Psoas muscle (tissue), 8 donors: ENCODE measurements at regions of chr9 and their contacts with region 1.

Region 1: DNA sequence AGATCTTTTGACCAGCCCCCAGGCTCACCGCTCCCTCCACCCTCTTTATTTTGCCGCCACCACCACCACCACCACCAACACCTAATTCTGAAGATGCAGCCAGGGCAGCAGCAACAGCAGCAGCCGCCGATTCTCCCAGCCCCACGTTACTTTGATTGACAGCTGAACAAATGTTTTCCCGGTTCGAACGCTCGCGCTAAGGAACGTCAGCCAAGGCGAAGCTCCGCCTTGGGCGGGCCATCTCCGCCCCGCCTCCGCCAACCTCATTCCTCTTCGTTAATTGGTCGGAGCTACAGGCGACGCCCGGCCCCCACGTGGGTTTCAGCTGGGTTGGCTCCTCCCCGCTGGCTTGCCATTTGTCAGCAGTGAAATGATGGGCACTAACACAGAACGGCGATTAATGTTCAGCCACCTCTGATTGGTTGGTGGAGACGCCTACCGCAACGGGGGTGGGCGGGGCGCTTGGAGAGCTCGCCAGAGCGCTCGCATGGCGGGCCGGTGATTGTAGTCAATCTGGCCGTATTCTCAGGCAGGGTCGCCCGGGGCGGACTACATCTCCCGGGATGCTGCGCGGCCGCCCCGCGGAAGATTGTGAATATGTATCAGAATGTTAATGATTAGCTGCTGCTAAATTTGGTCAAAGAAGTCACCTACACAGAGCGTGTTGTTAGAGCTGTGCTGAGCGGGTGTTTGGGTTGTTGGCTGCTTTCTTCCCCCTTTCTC is at the start of gene TLE4:
- DNase-seq: peak; percentile 99 to 100
- ATAC-seq: peak; percentile 90 to 97 (median 94)
- H3K4me3 ChIP-seq: peak within 1 kb of the TSS; percentile 96
- H3K27ac ChIP-seq: peak within 1 kb of the TSS; percentile 97
- H3K4me1 ChIP-seq: peaks cover 25% of the 10 kb centered on the region
- H3K27me3 ChIP-seq: no peaks in the 10 kb centered on the region
- CTCF ChIP-seq: no peak
- total RNA-seq, gene TLE4: 17.6 to 51.9 (median 21.9) TPM

Region 2: DNA sequence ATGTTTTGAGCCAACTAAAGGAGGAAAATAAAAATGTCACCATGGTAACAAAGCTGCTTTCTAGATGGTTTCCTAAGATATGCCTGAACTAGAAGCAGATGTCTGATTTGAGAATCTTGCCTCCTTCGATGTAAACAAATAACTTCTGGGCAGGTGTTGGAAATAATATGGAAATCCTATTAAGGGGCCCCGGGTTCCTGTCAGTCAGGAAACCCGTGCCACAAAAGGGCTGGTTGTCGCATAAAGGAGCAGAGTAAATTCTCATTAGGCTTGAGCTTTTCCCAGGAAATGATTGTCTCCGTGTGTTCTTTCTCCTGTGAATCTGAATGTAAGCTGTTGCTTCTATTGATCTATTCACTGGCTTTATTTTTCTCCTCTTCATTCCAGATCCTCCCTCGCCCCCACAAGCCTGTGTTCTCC is 91.1 kb after region 1 on chr9:
- intact Hi-C with region 1: loop called in 1 of 2 experiments (anchors 10 kb)
- DNase-seq: no peak
- ATAC-seq: no peak
- H3K4me3 ChIP-seq: no peak overlapping the region
- H3K27ac ChIP-seq: no peak overlapping the region
- H3K4me1 ChIP-seq: peaks cover 11% of the 10 kb centered on the region
- H3K27me3 ChIP-seq: no peaks in the 10 kb centered on the region
- CTCF ChIP-seq: no peak

Region 3: DNA sequence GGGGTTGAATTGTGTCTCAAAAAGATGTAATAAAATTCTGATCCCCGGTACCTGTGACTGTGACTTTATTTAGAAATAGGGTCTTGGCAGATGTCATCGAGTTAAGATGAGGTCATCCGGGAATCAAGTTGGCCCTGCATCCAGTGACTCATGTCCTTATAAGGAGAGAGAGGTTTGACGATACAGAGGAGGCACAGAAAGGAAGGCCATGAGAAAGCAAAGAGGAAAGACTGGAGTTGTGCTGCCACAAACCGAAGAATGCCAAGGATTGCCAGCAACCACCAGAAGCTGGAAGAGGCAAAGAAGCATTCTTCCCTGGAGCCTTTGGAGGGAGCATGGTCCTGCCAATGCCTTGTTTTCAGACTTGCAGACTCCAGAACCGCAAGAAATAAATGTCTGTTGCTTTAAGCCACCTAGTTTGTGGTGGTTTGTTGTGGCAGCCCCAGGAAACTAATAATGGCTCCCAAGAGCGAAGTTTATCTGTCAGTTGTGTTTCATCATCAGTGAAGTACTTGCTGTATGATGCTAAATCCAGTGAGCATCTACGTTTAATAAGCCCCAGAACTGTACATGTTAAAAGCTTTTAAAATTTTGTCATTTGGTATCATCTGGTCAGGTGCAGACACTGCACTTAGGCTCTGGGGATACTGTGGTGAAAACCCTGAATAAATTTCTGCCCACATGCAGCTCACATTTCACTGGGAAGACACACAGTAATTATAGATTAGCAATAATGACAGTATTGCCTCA is 115.1 kb after region 1 on chr9:
- intact Hi-C with region 1: loop called (anchors 5 to 10 kb)
- DNase-seq: peak; percentile 23 to 54
- ATAC-seq: peak; percentile 75 to 89 (median 87)
- H3K4me3 ChIP-seq: no peak overlapping the region
- H3K27ac ChIP-seq: peak overlapping the region; percentile 56
- H3K4me1 ChIP-seq: peaks cover 28% of the 10 kb centered on the region
- H3K27me3 ChIP-seq: no peaks in the 10 kb centered on the region
- CTCF ChIP-seq: no peak

Region 4: GRCh38 chr9:79694676-79695400 is 123.4 kb after region 1 on chr9:
- intact Hi-C with region 1: loop called in 1 of 2 experiments (anchors 10 kb)
- DNase-seq: no peak
- ATAC-seq: no peak
- H3K4me3 ChIP-seq: no peak overlapping the region
- H3K27ac ChIP-seq: no peak overlapping the region
- H3K4me1 ChIP-seq: peaks cover 25% of the 10 kb centered on the region
- H3K27me3 ChIP-seq: no peaks in the 10 kb centered on the region
- CTCF ChIP-seq: no peak

Region 5: DNA sequence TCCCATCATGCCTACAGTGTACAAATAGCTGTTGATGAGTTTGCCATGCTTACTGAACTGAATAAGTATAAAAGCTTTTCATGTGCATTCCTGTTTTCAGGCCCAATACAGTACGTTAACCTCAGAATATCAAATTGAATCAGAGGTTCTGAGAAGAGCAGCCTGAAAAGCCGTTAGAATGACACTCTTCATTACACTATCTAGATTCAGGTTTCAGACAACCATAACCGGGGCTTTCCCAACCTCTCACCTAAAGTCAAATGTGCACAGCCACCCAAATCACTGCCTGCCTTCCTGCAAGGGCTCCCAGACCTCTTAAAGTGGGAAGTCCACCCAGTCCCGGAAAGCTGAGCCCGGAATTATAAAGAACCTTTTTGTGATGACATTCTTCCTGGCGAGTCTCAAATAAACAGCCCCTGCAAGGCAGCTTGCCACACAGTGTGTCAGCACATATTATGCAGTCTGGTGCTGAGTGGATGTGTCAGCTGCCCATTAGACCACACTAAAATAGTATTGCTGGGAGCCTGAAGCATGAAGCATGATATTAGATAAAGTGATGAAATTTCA is 246.1 kb after region 1 on chr9:
- intact Hi-C with region 1: loop called in 1 of 2 experiments (anchors 10 kb)
- DNase-seq: peak; percentile 39 to 58
- ATAC-seq: peak; percentile 86 to 96 (median 93)
- H3K4me3 ChIP-seq: no peak overlapping the region
- H3K27ac ChIP-seq: peak overlapping the region; percentile 31
- H3K4me1 ChIP-seq: peaks cover 13% of the 10 kb centered on the region
- H3K27me3 ChIP-seq: no peaks in the 10 kb centered on the region
- CTCF ChIP-seq: no peak

Region 6: DNA sequence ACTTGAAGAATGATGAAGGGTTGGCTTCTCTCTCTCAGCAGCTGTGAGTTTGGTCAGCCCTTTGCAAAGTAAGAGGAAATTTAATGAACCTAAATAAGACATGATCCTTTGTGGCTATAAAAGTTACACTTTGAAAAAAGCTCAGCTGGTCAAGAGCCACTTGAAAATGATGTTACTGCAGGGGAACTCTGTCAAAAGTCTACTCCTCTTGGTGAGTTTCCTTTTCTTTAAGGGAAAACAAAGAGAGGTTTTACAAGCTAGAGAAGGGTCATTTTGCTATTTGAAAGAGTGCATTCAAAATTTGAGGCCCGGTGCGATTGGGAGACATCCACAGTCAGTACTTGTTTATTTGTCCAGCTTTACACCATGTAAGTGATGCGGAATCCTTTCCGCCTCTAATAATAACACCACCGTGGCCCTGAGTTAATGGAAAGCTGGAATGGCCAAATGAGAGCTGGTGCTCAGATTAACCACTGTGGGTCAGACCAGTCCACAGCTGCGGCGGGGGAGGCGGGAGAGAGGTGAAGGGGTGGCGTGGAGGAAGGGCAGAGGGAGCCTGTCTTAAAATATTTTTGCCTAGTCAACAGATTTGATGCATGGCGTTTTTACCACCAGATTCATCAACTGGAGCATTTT is 404.3 kb after region 1 on chr9:
- intact Hi-C with region 1: loop called (anchors 10 kb)
- DNase-seq: peak; percentile 25 to 85
- ATAC-seq: peak; percentile 85 to 97 (median 94)
- H3K4me3 ChIP-seq: peak overlapping the region; percentile 54
- H3K27ac ChIP-seq: peak overlapping the region; percentile 83
- H3K4me1 ChIP-seq: peaks cover 25% of the 10 kb centered on the region
- H3K27me3 ChIP-seq: no peaks in the 10 kb centered on the region
- CTCF ChIP-seq: peak; percentile 25